ENCODE measurements at regions of chr6 and their contacts with region 1.

Region 1: DNA sequence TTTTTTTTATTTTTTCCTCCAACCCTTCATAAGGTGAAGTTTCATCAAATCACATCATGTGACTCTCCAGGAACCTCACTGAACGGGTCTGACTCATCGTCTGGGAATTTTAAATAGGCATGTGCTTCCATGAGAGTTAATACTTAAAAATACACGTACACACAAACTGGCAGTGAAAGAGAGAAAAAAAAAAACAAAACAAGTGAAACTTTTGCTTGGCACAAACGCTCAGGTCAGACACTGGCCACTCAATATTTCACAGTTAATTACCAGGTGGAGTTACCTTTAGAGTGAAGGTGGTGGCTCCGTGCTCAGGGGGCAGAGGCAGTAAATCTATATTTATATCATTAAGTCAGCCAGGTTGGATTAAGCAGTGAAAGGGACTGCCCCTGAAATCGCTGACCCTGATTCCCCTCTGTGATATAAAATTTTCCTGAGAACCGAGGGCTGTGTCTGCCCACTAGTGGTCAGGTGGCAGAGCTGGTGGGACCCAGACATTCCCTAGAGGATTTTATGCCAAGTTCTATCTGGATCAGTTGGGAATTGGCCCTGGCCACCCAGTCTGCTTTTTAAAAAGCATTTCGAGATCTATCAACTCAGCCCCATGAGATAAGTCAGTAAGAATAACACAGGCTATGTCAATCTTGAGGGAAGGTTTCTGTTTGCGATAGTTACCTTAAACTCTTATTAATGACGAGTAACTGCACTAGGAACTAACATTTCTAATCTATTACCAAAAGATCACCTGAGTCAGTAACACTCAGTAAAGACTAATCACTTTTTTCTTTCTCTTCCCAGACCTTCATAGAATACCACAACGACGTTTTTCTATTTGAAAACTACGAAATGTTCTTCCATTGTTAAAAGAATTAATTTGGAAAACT is 259.1 kb downstream of the HDGFL1 start:
- DNase-seq: peak; percentile 97
- H3K4me3 ChIP-seq: peak overlapping the region in 2 of 3 experiments; percentile 5 to 19
- H3K27ac ChIP-seq: peak overlapping the region; percentile 90
- H3K4me1 ChIP-seq: peaks cover 21% of the 10 kb centered on the region
- H3K27me3 ChIP-seq: no peaks in the 10 kb centered on the region
- CTCF ChIP-seq: peak; percentile 80 to 85

Region 2: GRCh38 chr6:22880686-22881433 is 52.4 kb after region 1 on chr6:
- CTCF ChIA-PET with region 1: no interaction called
- dilution Hi-C with region 1: no loop called
- in situ Hi-C with region 1: no loop called
- intact Hi-C with region 1: loop called (anchors 2 kb)
- DNase-seq: peak; percentile 96
- H3K4me3 ChIP-seq: no peak overlapping the region
- H3K27ac ChIP-seq: peak overlapping the region; percentile 96
- H3K4me1 ChIP-seq: peaks cover 13% of the 10 kb centered on the region
- H3K27me3 ChIP-seq: no peaks in the 10 kb centered on the region
- CTCF ChIP-seq: no peak

Region 3: GRCh38 chr6:22892452-22892851 is 64.0 kb after region 1 on chr6:
- CTCF ChIA-PET with region 1: no interaction called
- dilution Hi-C with region 1: no loop called
- in situ Hi-C with region 1: no loop called
- intact Hi-C with region 1: loop called (anchors 5 kb)
- DNase-seq: peak; percentile 98
- H3K4me3 ChIP-seq: no peak overlapping the region
- H3K27ac ChIP-seq: peak overlapping the region; percentile 99
- H3K4me1 ChIP-seq: peaks cover 20% of the 10 kb centered on the region
- H3K27me3 ChIP-seq: no peaks in the 10 kb centered on the region
- CTCF ChIP-seq: no peak

Region 4: GRCh38 chr6:23414051-23414446 is 585.6 kb after region 1 on chr6:
- CTCF ChIA-PET with region 1: no interaction called
- dilution Hi-C with region 1: no loop called
- in situ Hi-C with region 1: no loop called
- intact Hi-C with region 1: loop called (anchors 10 kb)
- DNase-seq: peak; percentile 39
- H3K4me3 ChIP-seq: no peak overlapping the region
- H3K27ac ChIP-seq: no peak overlapping the region
- H3K4me1 ChIP-seq: no peaks in the 10 kb centered on the region
- H3K27me3 ChIP-seq: no peaks in the 10 kb centered on the region
- CTCF ChIP-seq: peak in 1 of 2 donors; percentile 41